ENCODE measurements at regions of chr2 and their contacts with region 1.

Region 1: DNA sequence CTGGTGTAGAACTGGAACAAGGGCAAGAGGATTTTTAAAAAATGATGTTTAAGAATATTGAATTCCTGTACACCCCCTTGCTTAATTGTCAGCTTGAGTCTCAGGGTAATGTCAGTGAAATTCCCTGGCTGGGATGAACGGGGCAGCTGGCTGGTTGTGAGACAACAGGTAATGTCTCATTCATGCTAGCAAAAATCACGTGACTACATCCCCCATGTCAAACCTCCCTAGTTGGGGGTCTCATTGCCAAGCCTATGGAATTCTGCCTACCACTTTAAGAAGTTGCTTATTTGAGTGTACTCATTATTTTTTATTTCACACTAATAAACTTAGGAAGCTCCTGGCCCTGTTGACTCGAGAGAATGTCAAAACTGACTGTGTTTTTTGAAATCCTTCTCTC is 218.3 kb downstream of the ICOS start:
- DNase-seq: no peak
- ATAC-seq: no peak

Region 2: GRCh38 chr2:204170411-204170810 is 15.6 kb after region 1 on chr2:
- intact Hi-C with region 1: loop called (anchors 2 kb)
- DNase-seq: no peak
- ATAC-seq: no peak

Region 3: DNA sequence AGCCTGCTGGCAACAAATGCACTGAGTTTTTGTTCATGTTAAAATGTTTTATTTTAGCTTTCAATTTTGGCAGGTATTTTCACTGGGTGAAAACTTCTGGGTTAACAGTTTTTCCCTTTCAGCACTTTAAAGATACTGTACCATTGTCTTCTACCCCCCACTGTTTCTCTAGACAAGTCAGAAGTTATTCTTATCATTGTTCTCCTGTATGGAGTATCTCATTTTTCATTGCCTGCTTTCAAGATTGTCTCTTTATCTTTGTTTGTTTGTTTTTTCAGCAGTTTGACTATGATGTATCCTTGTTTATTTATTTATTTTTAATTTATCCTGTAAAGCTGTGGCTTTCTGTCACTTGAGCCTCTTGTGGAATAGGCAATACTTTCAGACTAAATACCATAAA is 58.7 kb after region 1 on chr2:
- intact Hi-C with region 1: no loop called
- DNase-seq: no peak
- ATAC-seq: no peak